GM12878 (cell line): ENCODE measurements at regions of chr9 and their contacts with region 1.

Region 1: GRCh38 chr9:19174127-19174912 is 47.0 kb upstream of the PLIN2 start:
- DNase-seq: peak; percentile 64
- ATAC-seq: peak; percentile 99
- H3K4me3 ChIP-seq: no peak overlapping the region
- H3K27ac ChIP-seq: no peak overlapping the region
- H3K4me1 ChIP-seq: no peaks in the 10 kb centered on the region
- H3K27me3 ChIP-seq: no peaks in the 10 kb centered on the region
- CTCF ChIP-seq: peak; percentile 50 to 66 (median 51); a peak in 5 of 6 replicates
- EP300 ChIP-seq: no peak
- POLR2A ChIP-seq: no peak
- RAD21 ChIP-seq: peak; percentile 77

Region 2: GRCh38 chr9:18881758-18882157 is 292.6 kb before region 1 on chr9:
- CTCF ChIA-PET with region 1: no interaction called
- POLR2A ChIA-PET with region 1: no interaction called
- RAD21 ChIA-PET with region 1: no interaction called
- SMC1A ChIA-PET with region 1: no interaction called
- in situ Hi-C with region 1: no loop called
- intact Hi-C with region 1: no loop called
- DNase-seq: no peak
- ATAC-seq: no peak
- H3K4me3 ChIP-seq: no peak overlapping the region
- H3K27ac ChIP-seq: no peak overlapping the region
- H3K4me1 ChIP-seq: peaks cover 8% of the 10 kb centered on the region
- H3K27me3 ChIP-seq: no peaks in the 10 kb centered on the region; a peak in 2 of 4 replicates
- CTCF ChIP-seq: no peak
- EP300 ChIP-seq: no peak
- POLR2A ChIP-seq: no peak
- RAD21 ChIP-seq: no peak

Region 3: GRCh38 chr9:18988003-18988402 is 186.3 kb before region 1 on chr9:
- CTCF ChIA-PET with region 1: no interaction called
- POLR2A ChIA-PET with region 1: no interaction called
- RAD21 ChIA-PET with region 1: no interaction called
- SMC1A ChIA-PET with region 1: no interaction called
- in situ Hi-C with region 1: no loop called
- intact Hi-C with region 1: no loop called
- DNase-seq: no peak
- ATAC-seq: no peak
- H3K4me3 ChIP-seq: no peak overlapping the region
- H3K27ac ChIP-seq: no peak overlapping the region
- H3K4me1 ChIP-seq: no peaks in the 10 kb centered on the region
- H3K27me3 ChIP-seq: no peaks in the 10 kb centered on the region
- CTCF ChIP-seq: no peak
- EP300 ChIP-seq: no peak
- POLR2A ChIP-seq: no peak
- RAD21 ChIP-seq: no peak

Region 4: DNA sequence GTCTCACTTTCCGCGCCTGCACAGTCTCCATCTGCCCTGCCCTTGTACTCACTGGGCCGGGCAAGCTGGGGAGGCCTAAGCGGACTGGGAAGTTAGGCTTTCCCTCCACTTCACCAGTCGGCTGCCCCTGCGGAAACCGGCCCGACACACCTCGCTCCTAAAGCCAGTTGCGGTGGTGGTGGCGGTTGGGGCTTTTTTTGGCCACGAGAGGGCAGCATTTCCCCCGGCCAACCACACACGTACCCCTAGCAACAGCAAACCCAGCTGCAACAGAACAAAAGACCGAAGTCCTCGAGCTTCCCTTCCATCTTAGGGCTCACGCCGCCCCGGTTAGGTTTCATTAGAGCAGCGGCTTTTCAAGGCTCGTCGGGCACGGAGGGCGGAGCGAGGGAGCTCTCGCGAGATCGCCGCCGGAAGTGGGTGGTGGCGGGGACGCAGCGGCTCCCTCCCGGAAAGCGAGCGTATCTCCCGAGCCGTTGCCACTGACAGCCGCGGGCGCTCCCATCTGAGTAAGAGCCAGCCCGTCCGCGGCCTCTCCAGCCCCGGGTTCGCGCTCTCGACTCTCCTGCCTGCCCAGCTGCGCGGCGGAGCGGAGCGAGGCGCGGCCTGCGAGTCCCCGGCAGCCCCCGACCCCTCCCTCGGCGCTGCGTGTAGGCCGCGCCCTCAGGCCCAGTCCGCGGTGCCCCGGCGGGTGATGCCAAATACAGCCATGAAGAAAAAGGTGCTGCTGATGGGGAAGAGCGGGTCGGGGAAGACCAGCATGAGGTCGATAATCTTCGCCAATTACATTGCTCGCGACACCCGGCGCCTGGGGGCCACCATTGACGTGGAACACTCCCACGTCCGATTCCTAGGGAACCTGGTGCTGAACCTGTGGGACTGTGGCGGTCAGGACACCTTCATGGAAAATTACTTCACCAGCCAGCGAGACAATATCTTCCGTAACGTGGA is 125.1 kb before region 1 on chr9 and contains the start of gene RRAGA:
- CTCF ChIA-PET with region 1: interaction called, 40 read pairs
- POLR2A ChIA-PET with region 1: interaction called, 6 read pairs
- RAD21 ChIA-PET with region 1: interaction called, 64 read pairs
- SMC1A ChIA-PET with region 1: interaction called, 19 read pairs
- in situ Hi-C with region 1: loop called (anchors 5 kb)
- intact Hi-C with region 1: loop called (anchors 1 kb)
- DNase-seq: peak; percentile 90
- ATAC-seq: peak; percentile 93
- H3K4me3 ChIP-seq: peak within 1 kb of the TSS; percentile 88
- H3K27ac ChIP-seq: peak within 1 kb of the TSS; percentile 82
- H3K4me1 ChIP-seq: peaks cover 5% of the 10 kb centered on the region
- H3K27me3 ChIP-seq: no peaks in the 10 kb centered on the region
- CTCF ChIP-seq: peak; percentile 74 to 89 (median 79)
- EP300 ChIP-seq: peak; percentile 28 to 54; a peak in 1 of 4 replicates
- POLR2A ChIP-seq: peak; percentile 95
- RAD21 ChIP-seq: peak; percentile 36; the same call in 1 of the 2 replicates
- polyA plus RNA-seq, gene RRAGA: 10.1 to 19.3 TPM

Region 5: GRCh38 chr9:19127881-19128500 is 46.3 kb before region 1 on chr9:
- CTCF ChIA-PET with region 1: interaction called, 17 read pairs
- POLR2A ChIA-PET with region 1: interaction called, 9 read pairs
- RAD21 ChIA-PET with region 1: interaction called, 19 read pairs
- SMC1A ChIA-PET with region 1: interaction called, 28 read pairs
- in situ Hi-C with region 1: no loop called
- intact Hi-C with region 1: loop called (anchors 2 kb)
- DNase-seq: no peak
- ATAC-seq: peak; percentile 35
- H3K4me3 ChIP-seq: peak overlapping the region; percentile 77
- H3K27ac ChIP-seq: peak overlapping the region; percentile 85
- H3K4me1 ChIP-seq: peaks cover 23% of the 10 kb centered on the region
- H3K27me3 ChIP-seq: no peaks in the 10 kb centered on the region
- CTCF ChIP-seq: no peak
- EP300 ChIP-seq: no peak
- POLR2A ChIP-seq: no peak; the same call in 1 of the 2 replicates
- RAD21 ChIP-seq: no peak

Region 6: DNA sequence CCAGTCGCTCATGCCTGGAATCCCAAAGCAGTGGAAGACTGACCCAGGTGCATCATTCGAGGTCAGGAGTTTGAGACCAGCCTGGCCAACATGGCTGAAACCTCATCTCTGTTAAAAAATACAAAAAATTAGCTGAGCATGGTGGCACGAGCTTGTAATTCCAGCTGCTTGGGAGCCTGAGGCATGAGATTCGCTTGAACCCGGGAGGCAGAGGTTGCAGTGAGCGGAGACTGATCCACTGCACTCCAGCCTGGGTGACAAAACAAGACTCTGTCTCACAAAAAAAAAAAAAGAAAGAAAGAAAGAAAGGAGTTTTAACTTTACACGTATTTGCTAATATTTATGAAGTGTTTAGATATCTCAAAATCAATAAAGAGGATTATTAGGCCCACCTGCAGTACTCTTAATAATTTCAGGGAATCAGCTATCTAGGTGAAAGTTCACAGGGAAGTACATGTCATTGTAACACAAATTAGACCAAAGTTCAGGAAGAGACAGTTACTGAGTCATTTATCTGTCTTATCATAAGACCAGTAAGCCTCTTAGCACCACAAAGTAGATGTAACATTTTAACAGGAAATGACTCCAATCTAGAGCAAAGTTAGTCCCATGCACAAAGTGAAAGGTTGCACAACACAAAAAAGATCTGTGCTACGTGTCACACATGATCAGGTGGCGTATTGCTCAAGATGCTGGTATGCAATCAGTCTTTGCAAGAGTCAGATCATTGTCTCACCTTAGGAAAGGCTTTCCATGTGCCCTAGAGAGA is 12.9 kb before region 1 on chr9:
- CTCF ChIA-PET with region 1: interaction called, 33 read pairs
- POLR2A ChIA-PET with region 1: interaction called, 5 read pairs
- RAD21 ChIA-PET with region 1: interaction called, 23 read pairs
- SMC1A ChIA-PET with region 1: interaction called, 18 read pairs
- in situ Hi-C with region 1: no loop called
- intact Hi-C with region 1: no loop called
- DNase-seq: peak; percentile 74
- ATAC-seq: peak; percentile 96
- H3K4me3 ChIP-seq: no peak overlapping the region
- H3K27ac ChIP-seq: peak overlapping the region; percentile 35
- H3K4me1 ChIP-seq: peaks cover 5% of the 10 kb centered on the region; the same call in 1 of the 2 replicates
- H3K27me3 ChIP-seq: no peaks in the 10 kb centered on the region
- CTCF ChIP-seq: no peak
- EP300 ChIP-seq: peak in 1 of 2 experiments; percentile 75; a peak in 2 of 4 replicates
- POLR2A ChIP-seq: 0 out of 2 replicates have a peak, but pooled peaks have one; percentile 30
- RAD21 ChIP-seq: no peak

Region 7: GRCh38 chr9:19239955-19240354 is 65.6 kb after region 1 on chr9:
- CTCF ChIA-PET with region 1: no interaction called
- POLR2A ChIA-PET with region 1: no interaction called
- RAD21 ChIA-PET with region 1: no interaction called
- SMC1A ChIA-PET with region 1: no interaction called
- in situ Hi-C with region 1: no loop called
- intact Hi-C with region 1: no loop called
- DNase-seq: no peak
- ATAC-seq: no peak
- H3K4me3 ChIP-seq: no peak overlapping the region
- H3K27ac ChIP-seq: no peak overlapping the region
- H3K4me1 ChIP-seq: no peaks in the 10 kb centered on the region; the same call in 1 of the 2 replicates
- H3K27me3 ChIP-seq: no peaks in the 10 kb centered on the region
- CTCF ChIP-seq: no peak
- EP300 ChIP-seq: no peak
- POLR2A ChIP-seq: no peak
- RAD21 ChIP-seq: no peak

Region 8: GRCh38 chr9:19456996-19457692 is 282.8 kb after region 1 on chr9:
- CTCF ChIA-PET with region 1: interaction called, 32 read pairs
- POLR2A ChIA-PET with region 1: interaction called, 7 read pairs
- RAD21 ChIA-PET with region 1: interaction called, 31 read pairs
- SMC1A ChIA-PET with region 1: interaction called, 14 read pairs
- in situ Hi-C with region 1: no loop called
- intact Hi-C with region 1: loop called (anchors 2 kb)
- DNase-seq: peak; percentile 46
- ATAC-seq: peak; percentile 93
- H3K4me3 ChIP-seq: peak overlapping the region; percentile 47; the same call in 1 of the 2 replicates
- H3K27ac ChIP-seq: no peak overlapping the region
- H3K4me1 ChIP-seq: peaks cover 6% of the 10 kb centered on the region
- H3K27me3 ChIP-seq: no peaks in the 10 kb centered on the region
- CTCF ChIP-seq: peak; percentile 86 to 93 (median 92)
- EP300 ChIP-seq: no peak
- POLR2A ChIP-seq: no peak
- RAD21 ChIP-seq: peak; percentile 90